Common myeloid progenitor, CD34-positive (primary cell): ENCODE measurements at regions of chr6 and their contacts with region 1.

Region 1: DNA sequence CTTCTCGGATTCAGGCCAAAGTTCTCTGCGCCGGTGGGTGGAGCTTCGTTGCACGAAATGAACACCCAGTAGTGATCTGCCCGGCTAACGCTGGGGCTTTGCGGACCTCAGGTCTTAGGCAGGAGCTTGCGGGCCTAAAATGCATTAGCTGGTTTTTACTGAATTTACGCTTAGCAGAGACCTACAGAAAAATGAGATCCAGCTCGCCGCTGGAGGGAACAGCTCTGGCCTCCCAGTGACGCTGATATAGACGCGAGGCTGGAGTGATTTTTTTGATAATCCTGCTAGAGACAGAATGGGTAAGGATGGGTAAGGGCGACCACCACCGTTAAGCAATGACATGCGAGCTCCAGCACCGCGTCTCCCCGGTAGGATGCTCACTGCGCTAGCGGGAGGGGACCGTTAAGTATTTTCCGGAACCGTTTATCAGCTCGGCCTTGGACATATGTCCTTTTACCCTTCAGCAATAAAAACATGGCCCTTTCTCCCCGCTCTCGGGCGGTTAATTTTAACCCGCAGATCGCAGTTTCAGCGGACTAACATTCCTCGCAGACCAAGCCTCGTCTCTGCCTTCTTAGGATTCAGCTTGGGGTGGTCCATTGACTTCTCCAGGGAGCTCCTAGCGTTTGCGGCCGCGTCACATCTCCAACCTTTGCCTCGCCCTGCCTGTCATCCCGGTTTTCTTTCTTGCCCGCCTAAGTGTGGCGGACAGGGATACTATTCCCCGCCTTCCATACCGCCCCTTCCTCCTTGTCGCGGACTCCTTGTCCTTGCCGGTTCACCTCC is 109.3 kb downstream of the GPX5 start:
- DNase-seq: peak in 1 of 3 donors; percentile 30
- H3K4me3 ChIP-seq: peak overlapping the region in 4 of 7 experiments; percentile 27 to 59 (median 48)
- H3K27ac ChIP-seq: no peak overlapping the region
- H3K4me1 ChIP-seq: peaks cover 0 to 12% (median 6%) of the 10 kb centered on the region in 4 experiments
- H3K27me3 ChIP-seq: peaks cover 19 to 87% (median 50%) of the 10 kb centered on the region in 5 experiments

Region 2: GRCh38 chr6:28140616-28141015 is 494.3 kb before region 1 on chr6:
- CTCF ChIA-PET with region 1: no interaction called
- POLR2A ChIA-PET with region 1: interaction called, 10 read pairs
- DNase-seq: no peak
- H3K4me3 ChIP-seq: peak overlapping the region in 4 of 7 experiments; percentile 10 to 98 (median 48)
- H3K27ac ChIP-seq: peak overlapping the region in 1 of 2 experiments; percentile 43
- H3K4me1 ChIP-seq: peaks cover 9 to 50% (median 30%) of the 10 kb centered on the region in 4 experiments
- H3K27me3 ChIP-seq: no peaks in the 10 kb centered on the region

Region 3: DNA sequence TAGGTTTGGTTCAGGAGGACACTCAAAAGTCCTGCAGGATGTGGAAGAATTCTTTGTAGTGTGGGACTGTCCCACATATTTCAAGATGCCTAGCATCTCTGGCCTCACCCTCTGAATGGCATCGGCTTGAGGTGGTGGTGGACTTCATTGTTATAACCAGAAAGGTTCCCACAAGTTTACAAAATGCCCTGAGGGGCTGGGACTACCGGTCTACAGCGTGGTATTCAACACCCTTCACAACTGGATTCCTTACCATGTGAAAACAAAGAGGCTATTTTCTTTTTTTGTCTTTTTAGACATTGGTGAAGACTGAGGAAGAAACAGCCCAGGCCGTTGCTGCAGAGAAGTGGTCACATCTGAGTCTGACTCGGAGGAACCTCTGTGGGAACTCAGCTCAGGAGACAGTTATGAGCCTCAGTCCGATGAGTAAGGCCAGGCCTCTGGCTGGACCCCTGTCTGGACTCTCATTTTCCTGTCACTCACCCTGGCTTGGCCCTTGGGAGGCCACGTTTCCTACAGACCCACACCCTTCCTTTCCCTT is 338.4 kb before region 1 on chr6:
- CTCF ChIA-PET with region 1: no interaction called
- POLR2A ChIA-PET with region 1: no interaction called
- DNase-seq: no peak
- H3K4me3 ChIP-seq: no peak overlapping the region
- H3K27ac ChIP-seq: no peak overlapping the region
- H3K4me1 ChIP-seq: no peaks in the 10 kb centered on the region
- H3K27me3 ChIP-seq: no peaks in the 10 kb centered on the region

Region 4: DNA sequence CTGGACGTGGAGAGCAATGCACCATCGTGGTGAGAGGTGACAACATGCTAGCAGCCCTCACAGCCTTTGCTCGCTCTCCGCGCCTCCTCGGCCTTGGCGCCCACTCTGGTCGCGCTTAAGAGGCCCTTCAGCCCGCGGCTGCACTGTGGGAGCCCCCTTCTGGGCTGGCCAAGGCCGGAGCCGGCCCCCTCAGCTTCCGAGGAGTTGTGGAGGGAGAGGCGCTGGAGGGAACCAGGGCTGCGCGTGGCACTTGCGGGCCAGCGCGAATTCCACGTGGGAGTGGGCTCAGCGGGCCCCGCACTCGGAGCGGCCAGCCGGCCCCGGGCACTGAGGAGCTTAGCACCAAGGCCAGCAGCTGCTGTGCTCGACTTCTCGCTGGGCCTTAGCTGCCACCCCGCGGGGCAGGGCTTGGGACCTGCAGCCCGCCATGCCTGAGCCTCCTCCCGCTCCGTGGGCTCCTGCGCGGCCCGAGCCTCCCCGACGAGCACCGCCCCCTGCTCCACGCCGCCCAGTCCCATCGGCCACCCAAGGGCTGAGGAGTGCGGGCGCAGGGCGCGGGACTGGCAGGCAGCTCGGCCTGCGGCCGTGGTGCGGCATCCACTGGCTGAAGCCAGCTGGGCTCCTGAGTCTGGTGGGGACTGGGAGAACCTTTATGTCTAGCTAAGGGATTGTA is 123.2 kb before region 1 on chr6:
- CTCF ChIA-PET with region 1: no interaction called
- POLR2A ChIA-PET with region 1: no interaction called
- DNase-seq: no peak
- H3K4me3 ChIP-seq: no peak overlapping the region
- H3K27ac ChIP-seq: no peak overlapping the region
- H3K4me1 ChIP-seq: peaks cover 0 to 2% (median 0%) of the 10 kb centered on the region in 4 experiments
- H3K27me3 ChIP-seq: peaks cover 1 to 42% (median 14%) of the 10 kb centered on the region in 5 experiments

Region 5: GRCh38 chr6:28683944-28684538 is 49.1 kb after region 1 on chr6:
- CTCF ChIA-PET with region 1: no interaction called
- POLR2A ChIA-PET with region 1: no interaction called
- DNase-seq: peak in 2 of 3 donors; percentile 26 to 38
- H3K4me3 ChIP-seq: no peak overlapping the region
- H3K27ac ChIP-seq: no peak overlapping the region
- H3K4me1 ChIP-seq: no peaks in the 10 kb centered on the region
- H3K27me3 ChIP-seq: peaks cover 9 to 72% (median 28%) of the 10 kb centered on the region in 5 experiments